CD8-positive, alpha-beta memory T cell (primary cell): ENCODE measurements at regions of chr2 and their contacts with region 1.

Region 1: DNA sequence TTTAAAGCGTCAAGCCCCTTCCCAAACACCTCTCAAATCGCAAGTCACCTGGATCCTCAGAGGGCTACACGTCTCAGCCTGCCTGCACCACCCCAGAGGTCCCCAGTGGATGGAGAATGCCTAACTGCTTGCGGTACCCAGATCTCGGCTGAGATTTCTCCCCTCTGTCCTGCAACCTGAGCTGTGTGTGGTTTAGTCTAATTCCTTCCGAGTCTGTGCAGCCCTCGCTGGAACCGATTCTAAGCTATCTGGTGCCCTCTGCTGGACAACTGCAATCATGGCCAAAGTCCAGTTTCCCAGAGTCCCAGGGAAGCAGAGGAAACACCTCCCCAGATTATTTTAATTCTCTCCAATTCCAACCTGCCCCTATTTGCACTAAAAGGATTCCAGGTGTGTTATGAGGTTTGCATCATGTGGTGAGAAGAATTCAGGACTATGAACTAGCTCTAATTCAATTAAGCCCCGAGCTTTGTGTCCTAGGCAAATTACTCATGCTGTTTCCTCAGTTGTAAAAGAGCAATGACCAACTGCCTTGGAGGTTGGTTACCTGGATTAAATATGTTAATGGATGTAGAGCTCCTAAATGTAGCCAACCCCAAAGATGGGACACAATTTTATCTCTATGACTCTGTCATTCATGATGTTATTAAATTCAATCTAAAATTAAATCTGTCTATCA is 276.1 kb upstream of the NCKAP5 start:
- DNase-seq: peak; percentile 19 to 60 (median 30)
- H3K4me3 ChIP-seq: no peak overlapping the region
- H3K4me3 Mint-ChIP-seq: no peak overlapping the region
- H3K27ac ChIP-seq: no peak overlapping the region
- H3K27ac Mint-ChIP-seq: peak overlapping the region in 2 of 8 donors; percentile 11 to 77
- H3K4me1 ChIP-seq: no peaks in the 10 kb centered on the region
- H3K4me1 Mint-ChIP-seq: peaks cover 3 to 6% (median 5%) of the 10 kb centered on the region in 3 donors
- H3K27me3 ChIP-seq: no peaks in the 10 kb centered on the region
- H3K27me3 Mint-ChIP-seq: peaks cover 12 to 17% of the 10 kb centered on the region in 2 donors

Region 2: DNA sequence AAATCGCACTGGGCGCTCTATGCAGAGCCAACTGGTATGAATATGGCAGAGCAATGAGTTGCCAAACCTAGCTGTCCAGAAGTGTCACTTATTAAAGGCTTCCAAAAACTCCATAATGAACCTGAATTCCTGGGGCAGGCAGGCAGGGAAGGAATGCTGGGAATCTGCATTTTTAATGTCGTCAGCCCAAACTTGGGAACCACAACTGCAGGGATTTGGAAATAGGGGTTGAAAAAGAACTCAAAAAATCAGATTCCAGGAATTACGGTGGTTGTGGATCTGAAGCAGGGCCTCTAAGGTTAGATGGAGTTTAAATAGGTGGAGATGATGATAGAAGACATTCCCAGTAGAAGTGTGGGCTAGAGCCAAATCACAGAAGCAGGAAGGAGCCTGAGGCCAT is 291.1 kb before region 1 on chr2:
- CTCF ChIA-PET with region 1: no interaction called
- POLR2A ChIA-PET with region 1: no interaction called
- DNase-seq: no peak
- H3K4me3 ChIP-seq: no peak overlapping the region
- H3K4me3 Mint-ChIP-seq: no peak overlapping the region
- H3K27ac ChIP-seq: no peak overlapping the region
- H3K27ac Mint-ChIP-seq: no peak overlapping the region
- H3K4me1 ChIP-seq: no peaks in the 10 kb centered on the region
- H3K4me1 Mint-ChIP-seq: no peaks in the 10 kb centered on the region
- H3K27me3 ChIP-seq: no peaks in the 10 kb centered on the region
- H3K27me3 Mint-ChIP-seq: no peaks in the 10 kb centered on the region

Region 3: GRCh38 chr2:133802409-133803039 is 41.8 kb before region 1 on chr2:
- CTCF ChIA-PET with region 1: no interaction called
- POLR2A ChIA-PET with region 1: no interaction called
- DNase-seq: no peak
- H3K4me3 ChIP-seq: no peak overlapping the region
- H3K4me3 Mint-ChIP-seq: no peak overlapping the region
- H3K27ac ChIP-seq: no peak overlapping the region
- H3K27ac Mint-ChIP-seq: no peak overlapping the region
- H3K4me1 ChIP-seq: no peaks in the 10 kb centered on the region
- H3K4me1 Mint-ChIP-seq: no peaks in the 10 kb centered on the region
- H3K27me3 ChIP-seq: no peaks in the 10 kb centered on the region
- H3K27me3 Mint-ChIP-seq: peaks cover 9 to 59% of the 10 kb centered on the region in 2 donors

Region 4: GRCh38 chr2:133862400-133862977 is 18.1 kb after region 1 on chr2:
- CTCF ChIA-PET with region 1: interaction called, 26 read pairs
- POLR2A ChIA-PET with region 1: no interaction called
- DNase-seq: no peak
- H3K4me3 ChIP-seq: no peak overlapping the region
- H3K4me3 Mint-ChIP-seq: no peak overlapping the region
- H3K27ac ChIP-seq: no peak overlapping the region
- H3K27ac Mint-ChIP-seq: no peak overlapping the region
- H3K4me1 ChIP-seq: no peaks in the 10 kb centered on the region
- H3K4me1 Mint-ChIP-seq: no peaks in the 10 kb centered on the region
- H3K27me3 ChIP-seq: no peaks in the 10 kb centered on the region
- H3K27me3 Mint-ChIP-seq: peaks cover 9 to 42% of the 10 kb centered on the region in 2 donors